OCI-LY7 (cell line): ENCODE measurements at regions of chr7 and their contacts with region 1.

Region 1: GRCh38 chr7:76359111-76359978 is 554 bp upstream of the YWHAG start:
- DNase-seq: peak; percentile 99
- H3K4me3 ChIP-seq: peak overlapping the region; percentile 96
- H3K27ac ChIP-seq: peak overlapping the region; percentile 54
- H3K4me1 ChIP-seq: peaks cover 31% of the 10 kb centered on the region
- CTCF ChIP-seq: peak; percentile 78

Region 2: DNA sequence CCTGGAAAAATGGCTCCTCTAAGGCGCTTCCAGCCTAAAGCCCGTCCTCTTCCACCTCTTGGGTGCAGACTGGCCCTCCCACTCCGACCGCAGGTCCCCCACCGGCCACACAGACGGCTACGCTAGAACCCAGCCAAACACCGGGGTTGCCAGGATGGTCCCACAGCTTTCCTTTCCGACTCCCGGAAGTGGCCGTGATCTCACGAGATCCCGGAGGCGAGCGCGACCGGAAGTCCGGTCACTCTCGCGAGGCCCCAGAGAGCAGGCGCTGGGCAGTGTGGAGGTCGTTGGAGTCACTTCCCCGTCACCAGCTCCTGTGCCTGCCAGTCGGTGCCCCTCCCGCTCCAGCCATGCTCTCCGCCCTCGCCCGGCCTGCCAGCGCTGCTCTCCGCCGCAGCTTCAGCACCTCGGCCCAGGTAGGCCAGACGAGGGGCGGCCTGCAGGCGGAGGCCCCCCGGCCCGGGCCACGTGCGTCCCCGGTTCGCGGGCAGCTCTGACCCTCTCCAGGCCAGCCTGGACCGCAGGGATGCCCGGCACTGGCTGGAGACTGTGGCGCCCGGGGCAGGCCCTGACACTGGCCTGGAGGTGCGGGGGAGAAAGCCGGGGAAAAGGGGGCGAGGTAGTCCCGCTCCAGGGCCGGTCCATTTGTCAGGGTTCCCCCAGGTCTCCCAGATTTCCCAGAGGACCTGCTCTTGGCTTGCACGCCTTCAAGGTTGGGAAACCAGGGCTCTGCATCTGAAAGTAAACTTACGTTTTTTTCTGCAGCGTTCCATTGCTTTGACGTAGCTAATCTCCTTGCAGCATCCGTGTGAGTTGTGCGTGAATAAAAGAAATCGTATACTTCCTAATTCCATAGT is 311.3 kb before region 1 on chr7 and contains the starts of genes MDH2 and STYXL1:
- CTCF ChIA-PET with region 1: no interaction called
- POLR2A ChIA-PET with region 1: no interaction called
- intact Hi-C with region 1: loop called (anchors 5 kb)
- DNase-seq: peak; percentile 96
- H3K4me3 ChIP-seq: peak within 1 kb of the TSS; percentile 96
- H3K27ac ChIP-seq: peak within 1 kb of the TSS; percentile 74
- H3K4me1 ChIP-seq: peaks cover 7% of the 10 kb centered on the region
- CTCF ChIP-seq: no peak
- total RNA-seq, gene MDH2: 110 and 155 TPM in 2 replicates
- total RNA-seq, gene STYXL1: 19.4 and 27.6 TPM in 2 replicates

Region 3: DNA sequence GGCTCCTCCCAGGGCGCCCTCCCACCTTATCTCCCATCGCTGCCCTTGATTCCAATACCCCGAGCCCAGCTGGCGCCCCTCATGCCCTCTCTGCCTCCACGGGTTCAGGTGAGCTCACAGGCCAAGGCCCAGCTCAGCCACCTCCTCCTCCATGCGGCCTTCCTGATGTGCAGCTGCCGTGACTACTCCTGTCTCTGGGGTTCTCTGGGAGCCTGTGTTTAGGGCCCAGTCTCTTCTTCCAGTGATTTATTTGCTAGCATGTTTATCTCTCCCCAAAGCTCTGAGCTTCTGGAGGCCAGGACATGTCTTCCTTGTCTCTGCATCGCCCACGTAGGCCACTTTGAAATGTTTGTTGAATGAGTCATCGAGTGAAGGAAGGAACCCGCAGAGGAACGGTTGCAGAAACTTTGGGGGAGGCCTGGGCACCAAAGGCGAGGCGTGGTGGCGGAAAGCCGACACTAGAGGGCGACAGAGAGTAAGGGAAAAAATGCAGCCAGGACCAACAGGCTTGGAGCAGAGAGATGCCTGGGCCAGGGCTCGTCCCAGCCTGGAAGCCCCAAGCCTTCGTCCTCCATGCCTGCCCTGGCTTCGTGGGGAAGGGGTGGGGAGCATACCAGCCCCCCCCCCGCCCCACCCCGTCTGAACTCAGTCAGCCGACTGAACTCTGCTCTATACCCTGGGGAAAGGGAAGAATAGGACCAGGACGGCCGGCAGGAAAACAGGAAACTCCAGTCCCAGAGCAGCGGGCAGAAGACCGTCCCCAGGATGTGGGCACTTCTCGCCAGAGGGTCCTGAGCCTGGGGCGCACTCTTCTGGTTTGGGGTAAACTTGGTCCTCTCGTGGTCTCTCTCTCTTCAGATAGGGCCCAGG is 67.8 kb before region 1 on chr7:
- CTCF ChIA-PET with region 1: no interaction called
- POLR2A ChIA-PET with region 1: no interaction called
- intact Hi-C with region 1: loop called (anchors 2 kb)
- DNase-seq: peak; percentile 76
- H3K4me3 ChIP-seq: peak overlapping the region; percentile 35
- H3K27ac ChIP-seq: no peak overlapping the region
- H3K4me1 ChIP-seq: peaks cover 21% of the 10 kb centered on the region
- CTCF ChIP-seq: peak; percentile 92

Region 4: GRCh38 chr7:76314042-76314721 is 45.2 kb before region 1 on chr7:
- CTCF ChIA-PET with region 1: no interaction called
- POLR2A ChIA-PET with region 1: interaction called, 7 read pairs
- intact Hi-C with region 1: loop called (anchors 1 kb)
- DNase-seq: peak; percentile 94
- H3K4me3 ChIP-seq: peak overlapping the region; percentile 13
- H3K27ac ChIP-seq: no peak overlapping the region
- H3K4me1 ChIP-seq: peaks cover 24% of the 10 kb centered on the region
- CTCF ChIP-seq: peak; percentile 100

Region 5: GRCh38 chr7:76371396-76371795 is 12.1 kb after region 1 on chr7:
- CTCF ChIA-PET with region 1: interaction called, 10 read pairs
- POLR2A ChIA-PET with region 1: interaction called, 4 read pairs
- intact Hi-C with region 1: no loop called
- DNase-seq: no peak
- H3K4me3 ChIP-seq: no peak overlapping the region
- H3K27ac ChIP-seq: no peak overlapping the region
- H3K4me1 ChIP-seq: no peaks in the 10 kb centered on the region
- CTCF ChIP-seq: no peak

Region 6: DNA sequence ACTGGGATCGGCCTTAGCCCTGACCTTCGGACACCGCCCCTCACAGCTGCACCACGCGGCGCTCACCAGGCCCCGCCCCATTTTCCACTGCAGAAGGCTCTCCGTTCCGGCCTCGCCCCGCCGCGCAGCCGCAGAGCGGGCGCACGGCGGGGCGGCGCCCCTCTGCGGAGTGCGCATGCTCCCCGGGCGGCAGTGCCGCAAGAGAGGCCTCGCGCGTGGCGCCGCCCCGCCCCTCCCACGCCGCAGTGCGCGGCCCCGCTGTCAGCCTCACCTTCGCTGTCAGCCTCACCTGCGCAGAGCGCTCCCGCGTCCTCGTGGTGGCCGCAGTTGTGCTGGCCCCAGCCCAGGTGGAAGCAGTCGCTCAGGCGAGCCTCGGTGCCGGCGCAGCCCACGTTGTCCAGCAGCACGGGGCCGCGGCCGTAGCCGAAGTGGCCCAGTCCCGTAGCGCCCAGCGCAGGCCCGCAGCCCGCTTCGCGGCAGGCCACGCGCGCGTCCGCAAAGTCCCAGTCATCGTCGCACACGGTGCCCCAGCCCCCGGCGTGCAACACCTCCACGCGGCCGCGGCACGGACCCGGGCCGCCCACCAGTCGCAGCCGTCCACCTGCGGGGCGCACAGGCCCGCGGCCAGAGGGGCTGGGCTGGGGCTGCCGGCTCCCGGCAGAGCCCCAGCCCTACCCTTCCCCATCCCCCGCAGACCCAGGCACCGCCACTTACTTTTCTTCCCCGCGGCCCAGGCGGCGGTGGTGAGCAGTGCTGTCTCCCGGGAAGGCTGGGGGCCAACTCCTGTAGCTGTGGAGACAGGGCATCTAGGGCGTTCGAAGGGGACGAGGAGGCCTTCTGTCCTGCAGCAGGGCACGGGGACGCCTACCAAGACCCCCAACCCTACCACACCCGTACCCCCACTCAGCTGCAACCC is 34.0 kb after region 1 on chr7:
- CTCF ChIA-PET with region 1: no interaction called
- POLR2A ChIA-PET with region 1: no interaction called
- intact Hi-C with region 1: loop called (anchors 2 kb)
- DNase-seq: peak; percentile 95
- H3K4me3 ChIP-seq: peak overlapping the region; percentile 68
- H3K27ac ChIP-seq: no peak overlapping the region
- H3K4me1 ChIP-seq: peaks cover 29% of the 10 kb centered on the region
- CTCF ChIP-seq: no peak